ENCODE measurements at regions of chr11 and their contacts with region 1.

Region 1: GRCh38 chr11:35260342-35260985 is 121.5 kb downstream of the CD44 start:
- DNase-seq: no peak
- ATAC-seq: no peak
- H3K4me3 ChIP-seq: no peak overlapping the region
- H3K27ac ChIP-seq: no peak overlapping the region
- H3K4me1 ChIP-seq: no peaks in the 10 kb centered on the region
- H3K27me3 ChIP-seq: no peaks in the 10 kb centered on the region
- CTCF ChIP-seq: no peak
- EP300 ChIP-seq: no peak
- POLR2A ChIP-seq: no peak
- RAD21 ChIP-seq: no peak

Region 2: DNA sequence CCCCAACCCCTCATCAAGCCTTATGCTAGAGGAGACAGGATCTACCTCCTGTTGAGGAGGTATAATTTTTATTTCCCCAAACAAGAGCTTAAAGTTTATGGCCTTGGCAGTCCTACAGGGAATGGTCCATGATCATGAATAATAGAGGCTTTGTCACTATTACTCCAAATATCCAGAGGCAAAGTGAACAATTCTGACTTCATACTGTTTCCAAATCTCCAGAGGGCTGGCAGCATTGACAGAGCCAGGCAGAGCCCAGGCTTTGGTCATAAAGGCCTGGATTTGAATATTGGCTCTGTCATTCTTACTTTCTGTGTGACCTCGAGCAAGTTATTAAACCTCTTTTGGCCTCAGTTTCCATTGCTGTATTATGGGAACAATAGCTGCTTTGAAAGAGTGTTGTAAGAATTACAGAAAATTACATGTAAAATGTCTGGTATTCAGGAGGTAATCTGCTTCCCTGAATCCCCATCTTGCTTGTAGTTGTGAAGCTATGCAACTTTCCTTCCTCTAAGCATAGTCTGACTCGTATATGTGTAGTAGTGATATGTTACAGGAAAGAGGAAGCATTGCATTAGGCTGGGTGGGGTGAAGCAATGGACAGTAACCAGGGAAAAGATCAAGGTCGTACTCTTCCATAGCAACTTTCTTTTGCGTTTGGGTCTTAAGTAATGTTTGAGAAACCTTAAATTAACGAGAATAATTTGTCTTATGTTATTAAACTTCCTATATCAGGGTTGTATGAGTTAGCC is 32.7 kb before region 1 on chr11:
- CTCF ChIA-PET with region 1: no interaction called
- POLR2A ChIA-PET with region 1: no interaction called
- in situ Hi-C with region 1: no loop called
- intact Hi-C with region 1: loop called (anchors 2 kb)
- DNase-seq: no peak
- ATAC-seq: no peak; the same call in 2 of the 3 replicates
- H3K4me3 ChIP-seq: no peak overlapping the region
- H3K27ac ChIP-seq: no peak overlapping the region
- H3K4me1 ChIP-seq: peaks cover 27% of the 10 kb centered on the region; the same call in 1 of the 2 replicates
- H3K27me3 ChIP-seq: peaks cover 0 to 3% of the 10 kb centered on the region in 2 experiments; a peak in 2 of 5 replicates
- CTCF ChIP-seq: no peak
- EP300 ChIP-seq: no peak
- POLR2A ChIP-seq: no peak
- RAD21 ChIP-seq: no peak

Measured in HepG2 (cell line).